PC-3 (cell line): ENCODE measurements at regions of chr18 and their contacts with region 1.

Region 1: DNA sequence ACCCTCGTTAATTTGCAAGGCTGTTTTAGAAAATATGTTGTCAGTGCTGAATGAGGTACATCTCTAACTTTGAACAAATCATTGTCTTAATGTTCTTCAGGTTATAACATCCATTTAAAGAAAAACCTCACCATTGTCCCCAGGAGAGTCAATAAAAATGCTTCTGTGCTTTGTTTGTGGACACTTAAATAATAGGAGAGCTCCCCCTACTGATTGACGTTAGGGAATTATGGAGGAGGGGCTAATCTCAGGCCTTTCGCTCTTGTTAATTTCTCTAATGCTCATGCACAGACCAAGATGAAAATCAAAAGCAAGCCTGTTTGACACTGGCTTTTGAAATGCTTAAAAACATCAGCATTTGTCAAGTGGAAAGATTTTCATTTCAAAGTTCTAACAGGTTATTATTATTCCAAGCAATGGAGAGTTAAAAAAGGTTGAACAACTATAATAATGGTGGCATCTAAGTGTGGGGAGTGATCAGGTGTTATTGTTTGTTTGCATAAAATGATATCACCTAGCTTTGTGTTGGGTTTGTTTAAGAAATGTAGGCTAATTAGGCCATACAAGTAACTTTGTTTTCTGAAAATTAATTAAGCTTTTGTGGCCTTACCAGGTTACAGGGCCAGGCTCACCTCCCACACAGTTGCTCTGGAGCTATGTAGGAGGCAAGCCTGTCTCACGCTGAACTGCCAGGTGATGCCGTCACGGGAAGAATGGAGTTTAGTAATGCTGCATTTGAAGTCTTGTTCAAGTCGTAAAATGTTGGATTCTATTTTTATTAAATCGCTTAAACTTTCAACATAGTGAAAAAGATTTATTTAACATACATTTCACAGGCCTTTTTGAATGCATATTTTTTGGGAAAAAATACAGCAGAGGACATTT is 51.7 kb upstream of the SMIM21 start:
- DNase-seq: peak; percentile 73
- ATAC-seq: peak; percentile 87
- H3K4me3 ChIP-seq: no peak overlapping the region
- H3K27ac ChIP-seq: no peak overlapping the region
- H3K4me1 ChIP-seq: peaks cover 11% of the 10 kb centered on the region
- H3K27me3 ChIP-seq: no peaks in the 10 kb centered on the region
- CTCF ChIP-seq: peak; percentile 89

Region 2: DNA sequence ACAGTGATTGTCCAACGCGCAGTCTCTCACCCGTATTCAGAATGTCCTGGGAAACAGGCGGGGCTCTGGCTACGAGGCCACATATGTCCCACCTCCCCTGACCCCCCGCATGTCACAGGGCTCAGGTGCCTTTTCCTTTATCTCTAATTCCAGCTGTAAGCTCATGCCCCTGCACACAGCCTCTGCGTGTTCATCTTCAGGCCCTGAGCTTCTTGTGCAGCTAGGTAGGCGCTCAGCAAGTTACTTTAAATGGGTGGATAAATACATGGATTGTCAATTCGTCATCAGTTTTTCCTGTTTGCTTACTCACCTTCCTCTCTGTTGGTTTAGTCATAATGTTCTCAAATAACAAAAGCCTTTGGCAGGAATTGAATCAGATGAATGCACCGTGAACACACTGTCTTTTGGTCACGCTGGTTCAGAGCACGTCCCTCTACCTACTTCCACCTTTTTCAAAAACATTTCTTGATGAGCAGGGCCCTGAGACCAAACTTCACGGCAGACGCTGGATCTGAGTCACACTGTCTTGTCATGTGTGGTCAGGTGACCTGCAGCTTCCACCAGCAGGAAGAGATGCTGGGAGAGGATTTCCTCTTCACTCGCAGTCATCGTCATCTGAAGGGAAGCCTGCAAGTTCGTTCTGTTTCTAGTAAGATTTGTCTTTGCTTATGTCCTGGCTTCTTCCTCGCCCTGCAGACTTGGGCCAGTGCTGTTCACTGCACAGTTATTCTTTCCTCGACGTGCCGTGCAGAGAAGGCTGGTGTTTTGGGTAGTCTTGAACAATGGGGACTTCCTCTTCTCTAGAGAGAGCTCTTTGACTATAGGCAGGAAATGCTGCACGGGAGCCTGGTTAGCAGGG is 408.4 kb before region 1 on chr18:
- CTCF ChIA-PET with region 1: no interaction called
- POLR2A ChIA-PET with region 1: no interaction called
- intact Hi-C with region 1: loop called (anchors 1 kb)
- DNase-seq: peak; percentile 95
- ATAC-seq: peak; percentile 91
- H3K4me3 ChIP-seq: peak overlapping the region; percentile 62
- H3K27ac ChIP-seq: peak overlapping the region; percentile 87
- H3K4me1 ChIP-seq: peaks cover 26% of the 10 kb centered on the region
- H3K27me3 ChIP-seq: no peaks in the 10 kb centered on the region
- CTCF ChIP-seq: no peak

Region 3: GRCh38 chr18:75130591-75131328 is 348.5 kb before region 1 on chr18:
- CTCF ChIA-PET with region 1: no interaction called
- POLR2A ChIA-PET with region 1: no interaction called
- intact Hi-C with region 1: loop called (anchors 5 kb)
- DNase-seq: peak; percentile 20
- ATAC-seq: peak; percentile 16; the same call in 1 of the 2 replicates
- H3K4me3 ChIP-seq: peak overlapping the region; percentile 55
- H3K27ac ChIP-seq: no peak overlapping the region
- H3K4me1 ChIP-seq: peaks cover 8% of the 10 kb centered on the region
- H3K27me3 ChIP-seq: peaks cover 28% of the 10 kb centered on the region
- CTCF ChIP-seq: peak; percentile 45; the same call in 1 of the 2 replicates

Region 4: GRCh38 chr18:75209129-75209950 is 269.9 kb before region 1 on chr18 and contains the start of gene PTGR3:
- CTCF ChIA-PET with region 1: no interaction called
- POLR2A ChIA-PET with region 1: no interaction called
- intact Hi-C with region 1: loop called (anchors 1 kb)
- DNase-seq: peak; percentile 84
- ATAC-seq: peak; percentile 56
- H3K4me3 ChIP-seq: peak within 1 kb of the TSS; percentile 92
- H3K27ac ChIP-seq: peak within 1 kb of the TSS; percentile 89
- H3K4me1 ChIP-seq: peaks cover 38% of the 10 kb centered on the region
- H3K27me3 ChIP-seq: no peaks in the 10 kb centered on the region
- CTCF ChIP-seq: no peak
- total RNA-seq, gene PTGR3: 8.2 and 8.3 TPM in 2 replicates

Region 5: GRCh38 chr18:75314115-75314514 is 165.1 kb before region 1 on chr18:
- CTCF ChIA-PET with region 1: no interaction called
- POLR2A ChIA-PET with region 1: no interaction called
- intact Hi-C with region 1: loop called (anchors 10 kb)
- DNase-seq: no peak
- ATAC-seq: peak; percentile 38; the same call in 1 of the 2 replicates
- H3K4me3 ChIP-seq: no peak overlapping the region
- H3K27ac ChIP-seq: no peak overlapping the region
- H3K4me1 ChIP-seq: no peaks in the 10 kb centered on the region
- H3K27me3 ChIP-seq: peaks cover 5% of the 10 kb centered on the region; the same call in 1 of the 2 replicates
- CTCF ChIP-seq: peak; percentile 32; the same call in 1 of the 2 replicates